HepG2 (cell line): ENCODE measurements at regions of chr2 and their contacts with region 1.

Region 1: DNA sequence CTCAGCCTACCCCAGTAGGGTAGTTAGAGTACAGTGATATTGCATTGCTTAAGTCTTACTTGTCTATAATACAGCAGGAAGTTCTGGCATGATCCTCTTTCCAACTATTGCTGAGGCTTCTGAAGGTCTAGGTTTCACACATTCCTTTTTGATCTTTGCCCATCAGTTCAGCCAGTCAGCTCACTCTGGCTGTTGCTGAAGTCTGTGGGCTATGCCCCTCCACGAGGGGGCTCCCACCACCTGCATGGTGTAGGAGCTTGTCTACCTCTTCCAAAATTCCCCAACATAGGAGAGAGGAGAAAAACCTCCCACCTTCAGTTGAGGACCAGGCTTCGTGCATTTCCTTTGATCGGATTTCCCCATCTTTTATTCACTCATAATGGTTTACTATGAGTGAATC is 26.3 kb downstream of the PROKR1 start:
- DNase-seq: no peak
- ATAC-seq: no peak
- H3K4me3 ChIP-seq: no peak overlapping the region
- H3K27ac ChIP-seq: no peak overlapping the region
- H3K4me1 ChIP-seq: no peaks in the 10 kb centered on the region
- H3K27me3 ChIP-seq: peaks cover 0 to 2% of the 10 kb centered on the region in 2 experiments; a peak in 1 of 5 replicates
- CTCF ChIP-seq: no peak
- EP300 ChIP-seq: no peak
- POLR2A ChIP-seq: no peak
- RAD21 ChIP-seq: no peak

Region 2: GRCh38 chr2:68565858-68566257 is 103.8 kb before region 1 on chr2:
- CTCF ChIA-PET with region 1: no interaction called
- POLR2A ChIA-PET with region 1: no interaction called
- in situ Hi-C with region 1: loop called (anchors 5 kb)
- intact Hi-C with region 1: no loop called
- DNase-seq: peak; percentile 30
- ATAC-seq: peak; percentile 56; the same call in 1 of the 3 replicates
- H3K4me3 ChIP-seq: no peak overlapping the region
- H3K27ac ChIP-seq: no peak overlapping the region
- H3K4me1 ChIP-seq: peaks cover 6% of the 10 kb centered on the region
- H3K27me3 ChIP-seq: no peaks in the 10 kb centered on the region
- CTCF ChIP-seq: no peak
- EP300 ChIP-seq: no peak
- POLR2A ChIP-seq: no peak
- RAD21 ChIP-seq: no peak